CD4-positive, alpha-beta T cell (primary cell): ENCODE measurements at regions of chr2 and their contacts with region 1.

Region 1: GRCh38 chr2:147623328-147623727 is 221.5 kb upstream of the ACVR2A start:
- DNase-seq: peak in 4 of 14 experiments; percentile 19 to 75 (median 52)
- ATAC-seq: peak; percentile 97
- H3K4me3 ChIP-seq: no peak overlapping the region
- H3K4me3 Mint-ChIP-seq: peak overlapping the region; percentile 7
- H3K27ac ChIP-seq: no peak overlapping the region
- H3K27ac Mint-ChIP-seq: peak overlapping the region; percentile 12
- H3K4me1 ChIP-seq: peaks cover 16% of the 10 kb centered on the region
- H3K4me1 Mint-ChIP-seq: peaks cover 24% of the 10 kb centered on the region
- H3K27me3 ChIP-seq: no peaks in the 10 kb centered on the region
- H3K27me3 Mint-ChIP-seq: no peaks in the 10 kb centered on the region
- CTCF ChIP-seq: no peak

Region 2: GRCh38 chr2:147663153-147663961 is 40.0 kb after region 1 on chr2:
- CTCF ChIA-PET with region 1: no interaction called
- POLR2A ChIA-PET with region 1: interaction called, 7 read pairs
- intact Hi-C with region 1: loop called in 1 of 2 experiments (anchors 5 kb)
- DNase-seq: peak in 7 of 14 experiments; percentile 3 to 71 (median 16)
- ATAC-seq: peak; percentile 85
- H3K4me3 ChIP-seq: peak overlapping the region; percentile 48
- H3K4me3 Mint-ChIP-seq: peak overlapping the region; percentile 82
- H3K27ac ChIP-seq: peak overlapping the region; percentile 41 to 90
- H3K27ac Mint-ChIP-seq: peak overlapping the region; percentile 91
- H3K4me1 ChIP-seq: peaks cover 19% of the 10 kb centered on the region
- H3K4me1 Mint-ChIP-seq: peaks cover 48% of the 10 kb centered on the region
- H3K27me3 ChIP-seq: no peaks in the 10 kb centered on the region
- H3K27me3 Mint-ChIP-seq: no peaks in the 10 kb centered on the region
- CTCF ChIP-seq: no peak